Caco-2 (cell line): ENCODE measurements at regions of chr10 and their contacts with region 1.

Region 1: DNA sequence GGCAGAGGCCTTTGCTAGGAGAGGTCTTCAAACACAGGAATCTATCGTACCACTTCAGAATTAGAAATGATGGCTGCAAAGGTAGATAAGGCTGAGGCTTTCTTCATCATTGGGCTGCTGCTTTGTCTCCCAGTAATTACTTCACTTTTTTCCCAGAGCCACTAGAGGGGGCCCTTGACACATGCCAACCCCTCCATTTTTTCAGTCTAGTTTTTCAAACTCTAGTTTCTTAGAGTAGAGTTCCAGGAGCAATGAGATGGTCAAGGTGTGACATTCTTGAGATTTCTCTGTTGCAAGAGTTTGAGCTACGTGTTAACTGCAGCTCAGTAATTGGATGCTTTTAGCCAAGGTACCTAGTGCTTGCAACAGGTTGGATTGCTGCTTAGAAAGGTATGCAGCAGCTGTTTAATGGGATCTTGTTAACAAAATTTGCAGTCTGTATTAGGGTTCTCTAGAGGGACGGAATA is 33.8 kb upstream of the RBM20 start:
- DNase-seq: peak; percentile 56 to 78
- H3K4me3 ChIP-seq: no peak overlapping the region
- H3K4me3 Mint-ChIP-seq: no peak overlapping the region
- H3K27ac Mint-ChIP-seq: no peak overlapping the region
- H3K4me1 ChIP-seq: no peaks in the 10 kb centered on the region
- H3K4me1 Mint-ChIP-seq: peaks cover 6% of the 10 kb centered on the region
- H3K27me3 ChIP-seq: no peaks in the 10 kb centered on the region
- H3K27me3 Mint-ChIP-seq: no peaks in the 10 kb centered on the region
- CTCF ChIP-seq: peak; percentile 85 to 86

Region 2: DNA sequence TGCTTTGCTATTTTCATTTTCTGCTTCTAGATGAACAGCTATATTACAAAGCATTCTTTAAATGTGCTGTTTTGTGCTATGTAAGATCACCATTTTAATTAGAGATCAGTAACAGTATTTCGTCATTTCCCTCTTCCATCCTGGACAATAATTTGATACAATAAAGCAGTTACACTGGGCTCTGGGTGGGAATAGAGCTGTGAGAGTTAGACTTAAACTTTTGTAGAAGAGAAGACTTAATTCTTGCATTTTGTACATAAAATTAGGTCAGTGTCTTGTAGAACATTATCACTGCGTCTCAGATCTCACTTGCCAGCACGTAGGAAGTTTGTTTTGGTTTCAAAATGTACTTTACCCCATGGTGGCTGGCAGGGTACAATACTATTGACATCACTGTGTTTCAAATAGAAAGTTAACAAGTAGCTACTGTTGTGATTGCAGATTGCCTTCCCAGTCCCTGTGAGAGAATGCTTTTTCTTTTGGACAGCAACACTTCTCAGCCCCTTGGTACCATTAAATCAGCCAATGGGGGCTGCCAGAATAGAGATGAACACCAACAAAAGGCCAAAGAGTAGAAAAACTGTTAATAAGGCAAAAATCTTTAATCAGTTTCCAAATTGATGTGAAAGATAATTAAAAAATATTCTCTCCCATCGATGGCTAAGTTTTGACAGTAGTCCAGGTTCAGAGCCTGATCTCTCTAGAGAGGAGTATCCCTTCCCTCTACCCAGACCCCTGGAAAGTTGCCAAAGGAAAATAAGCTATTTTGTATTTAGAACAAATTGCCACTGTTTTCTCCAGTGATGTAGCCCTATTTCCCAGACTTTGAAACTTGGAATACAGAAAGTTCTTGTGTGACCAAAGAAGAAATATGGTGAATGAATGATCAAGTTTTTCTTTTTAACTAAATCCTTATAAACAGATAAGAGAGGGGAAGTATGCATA is 340.7 kb before region 1 on chr10:
- CTCF ChIA-PET with region 1: no interaction called
- POLR2A ChIA-PET with region 1: no interaction called
- intact Hi-C with region 1: no loop called
- DNase-seq: no peak
- H3K4me3 ChIP-seq: no peak overlapping the region
- H3K4me3 Mint-ChIP-seq: no peak overlapping the region
- H3K27ac Mint-ChIP-seq: no peak overlapping the region
- H3K4me1 ChIP-seq: peaks cover 15% of the 10 kb centered on the region; the same call in 1 of the 2 replicates
- H3K4me1 Mint-ChIP-seq: peaks cover 25% of the 10 kb centered on the region
- H3K27me3 ChIP-seq: no peaks in the 10 kb centered on the region
- H3K27me3 Mint-ChIP-seq: no peaks in the 10 kb centered on the region
- CTCF ChIP-seq: no peak

Region 3: DNA sequence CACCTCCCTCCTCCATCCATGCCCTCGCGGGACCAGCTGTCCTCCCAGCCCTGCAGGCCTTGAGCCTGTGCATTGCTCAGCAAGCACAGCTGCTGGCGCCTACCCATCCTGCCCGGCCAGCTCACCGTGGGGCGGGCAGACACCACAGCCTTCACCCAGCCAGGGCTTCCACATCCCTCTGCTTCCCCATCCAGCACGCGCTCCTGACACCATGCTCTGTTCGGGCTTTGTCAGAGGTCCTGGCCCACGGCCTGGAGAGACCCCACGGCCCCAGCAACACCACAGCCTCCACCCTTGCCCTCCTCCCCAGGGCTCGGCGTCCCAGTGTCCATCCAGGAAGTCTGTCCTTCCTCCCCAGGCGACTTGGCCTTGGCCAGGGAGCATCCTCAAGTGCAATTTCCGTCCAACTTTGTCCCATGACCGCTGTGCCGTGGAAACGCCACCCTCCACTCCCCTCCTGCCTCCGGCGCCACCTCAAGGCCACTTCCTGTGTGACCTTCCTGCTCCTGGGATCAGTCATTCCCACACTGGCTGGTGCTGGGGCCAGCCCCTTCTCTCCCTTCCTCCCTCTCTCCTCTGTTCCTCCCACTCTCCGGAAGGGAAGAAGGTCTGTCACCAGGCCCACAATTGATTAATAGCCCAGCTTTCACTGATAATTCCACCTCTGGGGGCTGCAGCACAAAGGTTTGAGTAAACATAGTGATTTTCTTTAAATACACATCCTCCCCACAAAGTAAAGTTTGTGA is 234.1 kb before region 1 on chr10:
- CTCF ChIA-PET with region 1: no interaction called
- POLR2A ChIA-PET with region 1: no interaction called
- intact Hi-C with region 1: no loop called
- DNase-seq: no peak
- H3K4me3 ChIP-seq: no peak overlapping the region
- H3K4me3 Mint-ChIP-seq: no peak overlapping the region
- H3K27ac Mint-ChIP-seq: peak overlapping the region; percentile 68
- H3K4me1 ChIP-seq: peaks cover 31% of the 10 kb centered on the region
- H3K4me1 Mint-ChIP-seq: peaks cover 22% of the 10 kb centered on the region
- H3K27me3 ChIP-seq: no peaks in the 10 kb centered on the region
- H3K27me3 Mint-ChIP-seq: no peaks in the 10 kb centered on the region
- CTCF ChIP-seq: no peak

Region 4: GRCh38 chr10:110641256-110641655 is 30.9 kb after region 1 on chr10:
- CTCF ChIA-PET with region 1: no interaction called
- POLR2A ChIA-PET with region 1: no interaction called
- intact Hi-C with region 1: loop called (anchors 1 kb)
- DNase-seq: peak; percentile 65 to 71
- H3K4me3 ChIP-seq: no peak overlapping the region
- H3K4me3 Mint-ChIP-seq: no peak overlapping the region
- H3K27ac Mint-ChIP-seq: no peak overlapping the region
- H3K4me1 ChIP-seq: peaks cover 12% of the 10 kb centered on the region
- H3K4me1 Mint-ChIP-seq: peaks cover 17% of the 10 kb centered on the region
- H3K27me3 ChIP-seq: peaks cover 2% of the 10 kb centered on the region
- H3K27me3 Mint-ChIP-seq: peaks cover 14% of the 10 kb centered on the region
- CTCF ChIP-seq: no peak

Region 5: DNA sequence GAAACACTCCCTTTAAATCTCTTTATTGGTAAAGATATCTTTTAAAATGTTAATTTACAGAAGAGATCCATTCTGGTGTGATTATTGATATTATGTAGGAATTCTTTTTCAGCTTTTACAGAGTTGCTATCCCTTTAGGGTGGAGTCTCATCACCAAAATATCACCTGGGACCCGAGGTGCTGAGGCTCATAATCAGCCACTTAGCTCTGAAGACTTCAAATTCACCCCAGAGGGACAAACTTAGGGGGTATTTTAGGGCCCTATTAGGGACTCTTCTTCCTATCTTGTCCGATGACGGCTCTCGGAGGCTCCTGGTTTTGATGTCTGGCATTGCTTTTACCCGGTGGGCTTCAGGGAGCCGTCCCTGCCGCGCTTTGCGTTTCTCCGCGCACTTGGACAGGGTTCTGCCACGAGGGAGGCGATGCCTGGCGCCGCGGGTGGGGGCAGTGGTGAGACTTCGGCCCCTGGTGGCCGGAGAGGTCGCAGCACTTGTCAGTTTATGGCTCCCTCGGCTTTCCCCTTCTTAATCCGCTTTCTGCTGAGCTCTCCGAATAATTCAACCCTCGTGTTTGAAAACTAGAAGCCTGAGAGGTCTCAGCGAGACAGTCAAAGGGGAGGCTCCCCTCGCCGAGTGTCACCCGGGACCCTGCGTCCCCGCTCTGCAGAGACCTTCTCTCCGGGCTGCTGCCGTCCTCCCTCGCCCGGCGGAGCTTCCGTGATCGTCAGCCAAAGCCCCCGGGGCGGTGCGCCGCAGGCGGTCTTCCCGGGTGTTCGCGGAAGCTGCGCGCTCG is 61.6 kb after region 1 on chr10:
- CTCF ChIA-PET with region 1: interaction called, 21 read pairs
- POLR2A ChIA-PET with region 1: no interaction called
- intact Hi-C with region 1: loop called (anchors 1 kb)
- DNase-seq: peak; percentile 64 to 75
- H3K4me3 ChIP-seq: peak overlapping the region; percentile 50
- H3K4me3 Mint-ChIP-seq: peak overlapping the region; percentile 71
- H3K27ac Mint-ChIP-seq: peak overlapping the region; percentile 60
- H3K4me1 ChIP-seq: no peaks in the 10 kb centered on the region
- H3K4me1 Mint-ChIP-seq: no peaks in the 10 kb centered on the region
- H3K27me3 ChIP-seq: no peaks in the 10 kb centered on the region
- H3K27me3 Mint-ChIP-seq: peaks cover 9% of the 10 kb centered on the region
- CTCF ChIP-seq: peak; percentile 69 to 81

Region 6: DNA sequence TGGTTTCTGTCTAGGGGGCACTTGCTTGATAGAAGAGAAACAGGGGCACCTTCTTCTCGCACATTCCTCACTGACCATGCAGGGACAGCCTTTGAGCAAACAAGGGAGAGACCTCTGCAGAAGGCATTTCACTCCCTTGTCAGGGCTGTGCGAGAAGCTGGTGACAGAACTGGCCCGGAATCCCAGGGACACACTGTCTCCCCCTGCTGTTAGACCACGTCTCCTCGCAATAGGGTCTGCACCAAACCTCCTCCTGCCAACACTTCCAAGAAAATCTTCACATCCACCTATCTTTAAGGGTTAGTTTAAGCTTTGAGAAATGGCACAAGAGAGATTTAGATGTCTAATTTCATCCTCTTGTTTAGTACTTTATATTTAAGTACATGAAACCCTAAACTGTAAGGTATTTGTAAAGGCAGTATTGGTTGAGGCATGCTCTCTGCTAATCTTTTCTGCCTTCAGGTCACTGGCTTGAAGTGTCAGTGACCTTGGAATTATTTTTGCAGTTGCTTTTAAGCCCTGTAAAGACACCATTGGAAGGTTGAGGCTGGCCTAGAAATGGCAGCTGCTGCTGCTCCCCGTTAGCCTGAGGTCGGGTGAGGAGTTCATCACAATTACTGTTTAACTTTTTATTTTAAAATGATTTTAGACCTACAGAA is 70.8 kb after region 1 on chr10:
- CTCF ChIA-PET with region 1: interaction called, 9 read pairs
- POLR2A ChIA-PET with region 1: no interaction called
- intact Hi-C with region 1: loop called (anchors 1 kb)
- DNase-seq: peak; percentile 57 to 69
- H3K4me3 ChIP-seq: no peak overlapping the region
- H3K4me3 Mint-ChIP-seq: no peak overlapping the region
- H3K27ac Mint-ChIP-seq: no peak overlapping the region
- H3K4me1 ChIP-seq: no peaks in the 10 kb centered on the region
- H3K4me1 Mint-ChIP-seq: no peaks in the 10 kb centered on the region
- H3K27me3 ChIP-seq: no peaks in the 10 kb centered on the region
- H3K27me3 Mint-ChIP-seq: no peaks in the 10 kb centered on the region
- CTCF ChIP-seq: peak; percentile 60 to 84

Region 7: DNA sequence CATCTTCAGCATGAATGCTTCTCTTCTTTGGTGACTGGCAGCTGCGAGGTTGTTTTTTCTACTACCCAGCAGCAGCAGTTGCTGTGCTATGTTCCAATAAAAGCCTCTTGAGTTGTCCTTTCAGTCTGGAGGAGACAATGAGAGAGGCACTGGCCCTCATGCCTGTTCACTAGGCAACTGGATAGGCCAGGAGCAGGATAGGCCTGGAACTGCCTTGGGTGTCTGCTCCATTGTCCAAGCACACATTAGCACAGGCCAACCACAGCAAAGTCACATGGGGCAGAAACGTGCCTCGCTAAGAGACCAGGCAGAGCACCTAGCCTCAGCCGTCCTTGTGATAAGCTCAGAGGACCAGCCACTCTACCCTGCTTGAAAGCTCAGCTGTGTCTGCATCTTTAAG is 184.5 kb after region 1 on chr10:
- CTCF ChIA-PET with region 1: no interaction called
- POLR2A ChIA-PET with region 1: no interaction called
- intact Hi-C with region 1: loop called (anchors 5 kb)
- DNase-seq: no peak
- H3K4me3 ChIP-seq: no peak overlapping the region
- H3K4me3 Mint-ChIP-seq: no peak overlapping the region
- H3K27ac Mint-ChIP-seq: no peak overlapping the region
- H3K4me1 ChIP-seq: peaks cover 18% of the 10 kb centered on the region
- H3K4me1 Mint-ChIP-seq: peaks cover 10% of the 10 kb centered on the region
- H3K27me3 ChIP-seq: no peaks in the 10 kb centered on the region
- H3K27me3 Mint-ChIP-seq: no peaks in the 10 kb centered on the region
- CTCF ChIP-seq: no peak

Region 8: DNA sequence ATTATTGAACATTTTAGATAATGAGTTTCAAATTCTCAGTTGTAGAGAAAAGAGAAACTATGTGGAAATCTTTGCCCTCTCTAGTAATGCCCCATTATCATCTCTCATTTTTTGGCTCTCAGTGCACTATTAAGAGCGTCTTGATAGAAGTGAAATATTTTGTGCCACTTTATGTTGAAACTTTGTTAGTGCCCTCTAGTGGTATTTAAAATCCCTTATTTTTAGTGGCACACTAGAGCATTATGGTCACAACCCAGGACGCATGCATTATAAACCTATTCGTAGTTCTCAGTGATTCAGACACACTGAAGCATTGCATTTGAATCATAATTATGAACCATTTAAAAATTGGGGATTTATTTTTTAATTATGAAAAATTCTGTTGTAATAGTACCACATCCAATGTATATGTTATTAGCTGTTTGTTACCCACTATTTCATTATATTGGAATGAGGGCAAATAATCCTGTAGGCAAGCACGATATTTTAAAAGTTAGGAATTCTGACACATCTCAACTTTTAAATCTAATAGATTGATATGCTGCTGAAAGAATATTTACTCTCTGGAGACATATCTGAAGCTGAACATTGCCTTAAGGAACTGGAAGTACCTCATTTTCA is 283.3 kb after region 1 on chr10:
- CTCF ChIA-PET with region 1: interaction called, 3 read pairs
- POLR2A ChIA-PET with region 1: no interaction called
- intact Hi-C with region 1: loop called (anchors 5 kb)
- DNase-seq: peak in 1 of 2 experiments; percentile 29
- H3K4me3 ChIP-seq: no peak overlapping the region
- H3K4me3 Mint-ChIP-seq: no peak overlapping the region
- H3K27ac Mint-ChIP-seq: no peak overlapping the region
- H3K4me1 ChIP-seq: peaks cover 7% of the 10 kb centered on the region; the same call in 1 of the 2 replicates
- H3K4me1 Mint-ChIP-seq: peaks cover 17% of the 10 kb centered on the region
- H3K27me3 ChIP-seq: no peaks in the 10 kb centered on the region
- H3K27me3 Mint-ChIP-seq: no peaks in the 10 kb centered on the region
- CTCF ChIP-seq: peak; percentile 35 to 48